ENCODE measurements at regions of chr9 and their contacts with region 1.

Region 1: GRCh38 chr9:109969011-109969410 is 189.0 kb downstream of the PALM2AKAP2 start:
- DNase-seq: no peak
- H3K4me3 Mint-ChIP-seq: peak overlapping the region; percentile 35
- H3K27ac Mint-ChIP-seq: peak overlapping the region; percentile 95
- H3K4me1 Mint-ChIP-seq: peaks cover 79% of the 10 kb centered on the region
- H3K27me3 Mint-ChIP-seq: peaks cover 2% of the 10 kb centered on the region

Region 2: GRCh38 chr9:109950710-109951443 is 18.1 kb before region 1 on chr9:
- intact Hi-C with region 1: loop called (anchors 1 kb)
- DNase-seq: no peak
- H3K4me3 Mint-ChIP-seq: peak overlapping the region; percentile 57
- H3K27ac Mint-ChIP-seq: peak overlapping the region; percentile 93
- H3K4me1 Mint-ChIP-seq: peaks cover 43% of the 10 kb centered on the region
- H3K27me3 Mint-ChIP-seq: no peaks in the 10 kb centered on the region

Region 3: DNA sequence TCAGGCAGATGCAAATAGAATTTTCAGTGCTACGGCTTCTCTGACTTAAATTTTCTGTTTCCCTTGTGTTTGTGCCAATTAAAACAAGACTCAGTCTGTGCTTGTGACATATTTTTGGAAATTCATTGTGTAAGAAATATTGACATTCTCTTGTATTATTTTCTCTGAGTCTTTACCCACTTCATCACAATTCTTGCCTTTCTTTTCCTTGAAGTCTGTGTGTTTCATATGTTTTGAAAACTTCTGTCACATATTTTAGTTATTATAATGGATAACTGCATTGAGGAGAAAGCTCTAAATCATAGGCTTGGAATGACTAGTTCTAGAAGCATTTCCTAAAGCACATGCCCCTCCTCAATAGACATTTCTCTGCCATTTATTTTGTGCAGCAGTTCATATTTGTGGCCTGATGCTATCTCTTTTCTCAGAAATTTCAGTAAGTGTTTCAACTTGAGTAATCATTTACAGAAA is 17.5 kb after region 1 on chr9:
- intact Hi-C with region 1: loop called (anchors 2 kb)
- DNase-seq: no peak
- H3K4me3 Mint-ChIP-seq: no peak overlapping the region
- H3K27ac Mint-ChIP-seq: peak overlapping the region; percentile 76
- H3K4me1 Mint-ChIP-seq: peaks cover 17% of the 10 kb centered on the region
- H3K27me3 Mint-ChIP-seq: no peaks in the 10 kb centered on the region